ENCODE measurements at regions of chr12 and their contacts with region 1.

Region 1: GRCh38 chr12:18139989-18140596 is 50.1 kb upstream of the RERGL start:
- DNase-seq: no peak
- H3K4me3 Mint-ChIP-seq: no peak overlapping the region
- H3K27ac Mint-ChIP-seq: no peak overlapping the region
- H3K4me1 Mint-ChIP-seq: peaks cover 13% of the 10 kb centered on the region
- H3K27me3 Mint-ChIP-seq: no peaks in the 10 kb centered on the region
- CTCF ChIP-seq: peak; percentile 46

Region 2: GRCh38 chr12:18224745-18225144 is 84.7 kb after region 1 on chr12:
- CTCF ChIA-PET with region 1: interaction called, 17 read pairs
- intact Hi-C with region 1: loop called (anchors 1 kb)
- DNase-seq: no peak
- H3K4me3 Mint-ChIP-seq: no peak overlapping the region
- H3K27ac Mint-ChIP-seq: no peak overlapping the region
- H3K4me1 Mint-ChIP-seq: peaks cover 10% of the 10 kb centered on the region
- H3K27me3 Mint-ChIP-seq: no peaks in the 10 kb centered on the region
- CTCF ChIP-seq: peak; percentile 56

Region 3: GRCh38 chr12:18297902-18298301 is 157.8 kb after region 1 on chr12:
- CTCF ChIA-PET with region 1: no interaction called
- intact Hi-C with region 1: loop called (anchors 2 kb)
- DNase-seq: no peak
- H3K4me3 Mint-ChIP-seq: peak overlapping the region; percentile 67
- H3K27ac Mint-ChIP-seq: peak overlapping the region; percentile 95
- H3K4me1 Mint-ChIP-seq: peaks cover 45% of the 10 kb centered on the region
- H3K27me3 Mint-ChIP-seq: no peaks in the 10 kb centered on the region
- CTCF ChIP-seq: no peak

Measured in Calu3 (cell line).